ENCODE measurements at regions of chr2 and their contacts with region 1.

Region 1: DNA sequence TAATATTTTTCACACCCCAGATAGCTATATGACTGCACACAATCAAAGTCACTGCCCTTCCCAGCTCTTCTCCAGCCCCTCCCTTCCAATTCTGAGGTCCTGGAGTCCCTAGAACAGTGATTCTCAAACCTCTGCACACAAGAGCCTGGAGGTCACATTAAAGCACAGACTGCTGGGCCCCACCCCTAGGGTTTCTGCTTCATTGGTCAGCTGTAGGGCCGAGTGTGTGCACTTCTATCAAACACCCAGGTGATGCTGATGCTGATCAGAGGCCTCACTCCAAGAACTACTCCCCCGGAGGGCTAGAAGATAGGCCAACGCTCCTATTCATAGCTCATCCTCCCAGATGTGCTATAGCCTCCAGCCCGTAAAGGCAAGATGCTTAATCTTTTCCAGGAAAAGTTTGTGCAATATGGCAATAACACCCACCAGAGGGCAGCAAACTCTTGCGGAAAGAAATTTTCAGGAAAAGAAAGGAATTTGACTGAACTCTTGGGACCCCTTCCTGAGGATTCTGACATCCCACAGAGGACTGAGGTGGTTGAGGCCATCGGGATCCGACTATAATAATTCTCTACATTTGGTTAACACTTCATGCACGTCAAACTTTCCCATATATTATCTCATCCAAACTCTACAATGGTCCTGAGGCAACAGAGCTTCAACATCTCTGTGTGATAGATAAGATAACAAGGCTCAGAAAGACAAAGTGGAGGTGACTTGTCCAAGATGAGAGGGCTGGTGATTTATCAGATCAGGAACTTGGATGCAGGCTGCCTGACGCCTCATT is 194.2 kb upstream of the PKDCC start:
- DNase-seq: no peak
- ATAC-seq: peak; percentile 27 to 53
- H3K4me3 ChIP-seq: no peak overlapping the region
- H3K27ac ChIP-seq: no peak overlapping the region
- H3K4me1 ChIP-seq: no peaks in the 10 kb centered on the region
- H3K27me3 ChIP-seq: no peaks in the 10 kb centered on the region

Region 2: DNA sequence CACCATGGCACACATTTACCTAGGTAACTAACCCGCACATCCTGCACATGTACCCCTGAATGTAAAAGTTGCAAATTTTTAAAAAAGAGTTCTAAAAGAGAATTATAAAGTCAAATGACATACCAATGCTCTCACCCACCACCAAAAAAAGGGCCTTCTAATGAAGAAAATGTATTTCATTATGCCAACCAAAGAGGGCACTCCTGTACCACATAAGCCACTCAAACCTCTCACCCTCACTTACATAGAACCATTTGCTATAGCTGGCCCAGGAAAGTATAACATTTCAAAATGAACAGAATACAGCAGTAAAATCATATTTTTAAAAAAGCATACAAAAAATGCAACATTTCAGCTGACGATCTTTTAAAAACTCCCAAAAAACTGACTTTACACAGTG is 47.3 kb before region 1 on chr2:
- intact Hi-C with region 1: no loop called
- DNase-seq: no peak
- ATAC-seq: no peak
- H3K4me3 ChIP-seq: no peak overlapping the region
- H3K27ac ChIP-seq: no peak overlapping the region
- H3K4me1 ChIP-seq: no peaks in the 10 kb centered on the region
- H3K27me3 ChIP-seq: no peaks in the 10 kb centered on the region

Region 3: GRCh38 chr2:41933585-41934320 is 80.1 kb after region 1 on chr2:
- intact Hi-C with region 1: no loop called
- DNase-seq: no peak
- ATAC-seq: peak; percentile 42 to 45
- H3K4me3 ChIP-seq: no peak overlapping the region
- H3K27ac ChIP-seq: peak overlapping the region; percentile 93
- H3K4me1 ChIP-seq: peaks cover 18% of the 10 kb centered on the region
- H3K27me3 ChIP-seq: no peaks in the 10 kb centered on the region

Region 4: GRCh38 chr2:42086500-42086953 is 232.9 kb after region 1 on chr2:
- intact Hi-C with region 1: loop called in 3 of 4 experiments (anchors 5 kb)
- DNase-seq: peak; percentile 32 to 65 (median 57)
- ATAC-seq: peak; percentile 27 to 64
- H3K4me3 ChIP-seq: no peak overlapping the region
- H3K27ac ChIP-seq: no peak overlapping the region
- H3K4me1 ChIP-seq: peaks cover 6% of the 10 kb centered on the region
- H3K27me3 ChIP-seq: no peaks in the 10 kb centered on the region

Measured in right cardiac atrium (tissue), 5 donors.